Activated CD4-positive, alpha-beta T cell treated with anti-CD3 and anti-CD28 coated beads for 36 hours (primary cell): ENCODE measurements at regions of chr6 and their contacts with region 1.

Region 1: DNA sequence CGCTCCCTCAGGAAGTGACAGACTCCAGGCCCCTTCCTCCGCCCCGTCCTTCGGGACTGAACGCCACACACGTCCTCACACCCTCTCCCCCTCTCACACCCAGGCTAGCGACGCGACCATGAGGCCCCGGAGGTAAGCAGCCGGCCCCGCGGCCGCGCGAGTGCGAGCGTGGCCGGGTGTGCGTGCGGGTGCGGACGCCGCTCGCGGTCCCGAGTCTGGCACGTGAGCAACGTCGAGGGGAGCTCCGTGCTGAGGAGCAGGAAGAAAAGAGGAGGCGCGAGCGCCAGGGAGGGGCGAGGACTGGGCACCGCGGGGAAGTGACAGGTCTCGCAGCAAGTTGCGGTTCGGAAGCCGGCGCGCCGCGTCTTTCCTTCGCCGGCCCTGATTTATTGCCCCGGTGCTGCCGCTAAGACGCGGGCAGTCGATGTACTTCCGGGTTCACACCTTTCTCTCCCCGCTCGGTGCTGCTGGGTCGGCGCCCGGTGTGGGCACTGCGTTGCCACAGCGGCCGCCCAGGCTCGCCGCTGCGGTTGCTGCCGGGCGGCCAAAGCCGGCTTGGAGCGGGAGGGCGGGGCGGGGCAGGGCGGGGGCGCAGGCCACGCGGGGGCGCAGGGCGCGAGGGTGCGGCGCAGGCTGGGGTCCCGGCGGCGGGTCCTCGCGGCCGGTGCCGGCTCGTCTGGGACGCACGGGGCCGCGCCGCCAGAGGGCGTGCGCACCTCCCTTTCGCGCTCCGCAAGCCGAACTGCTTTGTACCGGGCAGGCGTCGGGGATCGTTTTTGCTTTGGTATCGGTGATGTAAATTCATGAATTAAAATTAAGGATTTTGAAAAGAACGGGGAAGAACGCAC is 15.8 kb upstream of the LIN28B start:
- DNase-seq: peak; percentile 70
- ATAC-seq: peak; percentile 86
- H3K4me3 Mint-ChIP-seq: peak overlapping the region; percentile 65
- H3K27ac Mint-ChIP-seq: no peak overlapping the region
- H3K4me1 Mint-ChIP-seq: peaks cover 8% of the 10 kb centered on the region
- H3K27me3 Mint-ChIP-seq: peaks cover 39% of the 10 kb centered on the region

Region 2: DNA sequence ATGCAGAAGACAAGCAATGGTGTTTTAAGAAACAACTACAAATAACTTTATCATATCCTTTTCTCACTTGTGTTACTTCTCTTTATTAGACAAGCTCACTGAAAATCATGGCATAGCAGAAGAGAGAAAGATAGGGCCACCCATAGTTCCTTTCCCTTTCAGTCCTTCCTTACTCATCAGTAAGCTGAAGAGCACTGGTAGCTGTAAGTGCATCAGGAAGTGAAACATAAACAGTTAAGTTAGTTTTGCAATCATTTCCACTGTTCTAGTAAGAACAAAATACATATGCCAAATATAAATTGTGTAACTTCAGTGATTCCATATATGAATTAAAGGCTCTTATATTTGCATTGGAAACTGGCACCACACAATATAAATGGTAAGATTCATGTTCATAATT is 301.4 kb before region 1 on chr6:
- CTCF ChIA-PET with region 1: no interaction called
- POLR2A ChIA-PET with region 1: no interaction called
- intact Hi-C with region 1: no loop called
- DNase-seq: no peak
- ATAC-seq: peak; percentile 74
- H3K4me3 Mint-ChIP-seq: no peak overlapping the region
- H3K27ac Mint-ChIP-seq: no peak overlapping the region
- H3K4me1 Mint-ChIP-seq: no peaks in the 10 kb centered on the region
- H3K27me3 Mint-ChIP-seq: no peaks in the 10 kb centered on the region

Region 3: GRCh38 chr6:104682722-104683643 is 258.1 kb before region 1 on chr6:
- CTCF ChIA-PET with region 1: no interaction called
- POLR2A ChIA-PET with region 1: no interaction called
- intact Hi-C with region 1: loop called in 1 of 2 experiments (anchors 10 kb)
- DNase-seq: peak; percentile 86
- ATAC-seq: peak; percentile 73
- H3K4me3 Mint-ChIP-seq: no peak overlapping the region
- H3K27ac Mint-ChIP-seq: no peak overlapping the region
- H3K4me1 Mint-ChIP-seq: peaks cover 20% of the 10 kb centered on the region
- H3K27me3 Mint-ChIP-seq: no peaks in the 10 kb centered on the region

Region 4: GRCh38 chr6:104705095-104705707 is 235.9 kb before region 1 on chr6:
- CTCF ChIA-PET with region 1: no interaction called
- POLR2A ChIA-PET with region 1: no interaction called
- intact Hi-C with region 1: no loop called
- DNase-seq: peak; percentile 56
- ATAC-seq: peak; percentile 86
- H3K4me3 Mint-ChIP-seq: peak overlapping the region; percentile 37
- H3K27ac Mint-ChIP-seq: peak overlapping the region; percentile 48
- H3K4me1 Mint-ChIP-seq: peaks cover 38% of the 10 kb centered on the region
- H3K27me3 Mint-ChIP-seq: no peaks in the 10 kb centered on the region

Region 5: DNA sequence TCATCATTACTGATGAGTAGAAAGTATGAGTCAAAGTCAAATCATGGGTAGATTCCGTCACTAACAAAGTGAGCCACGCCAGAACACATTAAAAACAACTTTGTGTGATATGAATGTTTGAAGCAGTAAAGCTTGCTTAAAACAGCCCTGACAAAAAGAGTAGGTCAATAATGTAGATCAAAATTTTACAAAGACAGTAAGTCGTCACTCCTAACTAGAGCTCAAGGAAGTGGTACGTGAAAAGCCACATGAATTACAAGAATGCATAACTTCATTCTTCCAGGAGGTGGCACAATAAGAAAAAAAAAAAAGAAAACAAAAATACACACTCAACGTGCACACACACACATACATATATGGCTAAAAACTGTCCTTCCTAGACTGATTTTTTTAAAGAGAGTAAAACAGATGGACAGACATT is 151.3 kb before region 1 on chr6:
- CTCF ChIA-PET with region 1: no interaction called
- POLR2A ChIA-PET with region 1: no interaction called
- intact Hi-C with region 1: loop called in 1 of 2 experiments (anchors 1 kb)
- DNase-seq: peak; percentile 33
- ATAC-seq: peak; percentile 95
- H3K4me3 Mint-ChIP-seq: peak overlapping the region; percentile 50
- H3K27ac Mint-ChIP-seq: peak overlapping the region; percentile 95
- H3K4me1 Mint-ChIP-seq: peaks cover 33% of the 10 kb centered on the region
- H3K27me3 Mint-ChIP-seq: no peaks in the 10 kb centered on the region

Region 6: GRCh38 chr6:104813552-104813951 is 127.6 kb before region 1 on chr6:
- CTCF ChIA-PET with region 1: no interaction called
- POLR2A ChIA-PET with region 1: no interaction called
- intact Hi-C with region 1: no loop called
- DNase-seq: no peak
- ATAC-seq: no peak
- H3K4me3 Mint-ChIP-seq: no peak overlapping the region
- H3K27ac Mint-ChIP-seq: no peak overlapping the region
- H3K4me1 Mint-ChIP-seq: peaks cover 8% of the 10 kb centered on the region
- H3K27me3 Mint-ChIP-seq: no peaks in the 10 kb centered on the region

Region 7: DNA sequence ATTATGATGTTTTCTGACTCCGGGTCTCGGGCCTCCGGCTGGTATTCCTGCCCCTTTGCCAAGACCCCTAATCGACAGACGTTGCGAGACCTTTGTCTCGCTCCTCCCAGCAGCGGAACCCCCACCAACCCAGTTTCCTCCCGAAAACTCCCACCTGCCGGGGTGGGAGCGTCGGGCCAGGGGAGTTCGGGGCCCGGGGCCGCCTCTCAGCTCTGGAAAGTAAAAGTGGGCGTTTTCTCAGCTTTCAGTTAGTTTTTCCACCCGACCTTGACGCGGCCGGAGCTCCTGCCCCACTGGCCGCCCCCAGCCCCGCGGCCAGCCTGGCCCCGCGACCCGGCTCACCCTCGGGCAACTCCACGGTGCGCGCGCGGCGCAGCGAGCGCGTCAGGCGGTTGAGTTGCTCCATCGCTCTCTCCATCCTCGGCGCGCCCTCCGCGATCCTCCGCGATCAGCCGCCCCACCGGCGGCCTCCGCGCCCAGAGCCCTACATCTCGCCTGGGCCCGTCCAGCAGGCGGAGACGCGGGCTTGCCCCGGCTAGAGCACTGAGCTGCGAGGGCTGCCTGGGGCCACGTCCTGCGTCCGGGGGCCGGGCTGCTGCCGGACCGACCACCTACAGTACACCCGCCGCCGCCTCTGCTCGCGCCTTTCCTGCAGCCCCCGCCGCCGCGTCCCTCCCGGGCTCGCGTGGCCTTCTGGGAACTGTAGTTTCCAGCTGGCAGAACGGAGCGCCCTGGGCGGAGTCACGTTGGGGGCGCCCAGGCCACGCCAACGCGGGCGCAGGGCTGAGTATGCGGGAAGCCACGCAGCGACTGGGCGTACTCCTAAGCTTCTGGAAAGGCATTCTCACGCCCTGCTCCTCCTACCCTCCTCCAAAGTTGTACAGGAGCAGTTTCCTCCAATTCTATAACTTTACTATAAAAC is 81.6 kb before region 1 on chr6 and contains the start of gene HACE1:
- CTCF ChIA-PET with region 1: interaction called, 5 read pairs
- POLR2A ChIA-PET with region 1: no interaction called
- intact Hi-C with region 1: loop called in 1 of 2 experiments (anchors 1 kb)
- DNase-seq: peak; percentile 94
- ATAC-seq: peak; percentile 99
- H3K4me3 Mint-ChIP-seq: peak within 1 kb of the TSS; percentile 90
- H3K27ac Mint-ChIP-seq: peak within 1 kb of the TSS; percentile 90
- H3K4me1 Mint-ChIP-seq: peaks cover 19% of the 10 kb centered on the region
- H3K27me3 Mint-ChIP-seq: peaks cover 3% of the 10 kb centered on the region
- total RNA-seq, gene HACE1: 12.1 to 15.7 TPM

Region 8: GRCh38 chr6:104957301-104958177 is 16.4 kb after region 1 on chr6:
- CTCF ChIA-PET with region 1: interaction called, 3 read pairs
- POLR2A ChIA-PET with region 1: no interaction called
- intact Hi-C with region 1: loop called in 1 of 2 experiments (anchors 1 kb)
- DNase-seq: peak; percentile 15
- ATAC-seq: peak; percentile 30
- H3K4me3 Mint-ChIP-seq: peak overlapping the region; percentile 33
- H3K27ac Mint-ChIP-seq: no peak overlapping the region
- H3K4me1 Mint-ChIP-seq: peaks cover 15% of the 10 kb centered on the region
- H3K27me3 Mint-ChIP-seq: peaks cover 55% of the 10 kb centered on the region

Region 9: DNA sequence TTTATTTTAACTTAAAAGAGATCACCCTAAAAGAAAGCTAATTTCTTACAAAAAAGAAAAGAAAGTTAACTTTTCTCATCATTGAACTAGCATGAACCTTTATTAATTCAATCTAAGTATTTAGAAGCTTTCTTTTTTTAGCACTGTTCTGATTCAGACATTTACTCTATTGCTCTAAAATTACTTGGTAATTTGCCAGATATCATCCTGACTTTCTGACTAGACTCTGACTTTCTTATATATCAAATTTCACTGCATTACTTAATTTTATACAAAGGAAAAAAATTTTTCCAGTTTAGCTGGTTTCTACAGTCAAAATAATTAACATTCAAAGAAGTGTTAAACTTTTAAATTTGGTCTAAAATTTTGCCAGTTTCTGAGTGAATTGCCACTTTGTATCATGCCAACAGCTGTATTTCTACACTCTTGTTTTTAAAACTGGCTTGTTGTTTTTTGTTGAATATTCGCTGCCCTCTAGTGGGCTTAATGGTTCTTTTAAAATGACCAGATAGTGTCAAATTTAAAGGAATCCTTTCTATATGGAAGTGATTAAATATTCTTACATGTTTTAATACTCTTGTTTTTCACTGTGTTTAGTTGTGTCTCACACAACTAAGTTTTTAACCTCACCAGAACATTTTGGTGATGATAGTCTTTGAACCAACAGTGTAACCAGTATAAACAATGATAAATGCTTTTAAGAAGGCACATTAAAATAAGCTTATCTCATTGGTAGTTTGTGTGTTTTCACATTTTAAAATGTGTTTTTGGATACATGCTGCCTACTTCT is 136.7 kb after region 1 on chr6:
- CTCF ChIA-PET with region 1: interaction called, 5 read pairs
- POLR2A ChIA-PET with region 1: no interaction called
- intact Hi-C with region 1: loop called (anchors 1 to 5 kb)
- DNase-seq: no peak
- ATAC-seq: no peak
- H3K4me3 Mint-ChIP-seq: no peak overlapping the region
- H3K27ac Mint-ChIP-seq: no peak overlapping the region
- H3K4me1 Mint-ChIP-seq: no peaks in the 10 kb centered on the region
- H3K27me3 Mint-ChIP-seq: peaks cover 13% of the 10 kb centered on the region